PC-9 (cell line): ENCODE measurements at regions of chr10 and their contacts with region 1.

Region 1: DNA sequence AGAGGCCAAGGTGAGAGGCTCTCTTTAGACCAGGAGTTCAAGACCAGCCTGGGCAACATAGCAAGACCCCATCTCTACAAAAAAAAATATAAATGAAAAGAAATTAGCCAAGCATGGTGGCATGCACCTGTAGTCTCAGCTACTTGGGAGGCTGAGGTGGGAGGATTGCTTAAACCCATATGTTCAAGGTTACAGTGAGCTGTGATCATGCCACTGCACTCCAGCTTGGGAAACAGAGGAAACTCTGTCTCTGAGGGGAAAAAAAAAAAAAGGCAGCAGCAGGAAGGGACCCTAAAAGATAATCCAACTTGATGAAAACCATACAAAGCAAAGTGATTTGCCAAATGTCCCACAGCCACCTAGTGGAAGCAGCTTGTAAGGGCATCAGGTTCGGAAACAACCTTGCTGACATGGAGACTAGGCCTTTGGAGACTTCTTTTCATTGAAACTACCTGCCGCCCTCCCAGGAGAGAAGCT is 15.6 kb upstream of the PBLD start:
- DNase-seq: peak in 1 of 2 experiments; percentile 38
- H3K4me3 ChIP-seq: no peak overlapping the region
- H3K27ac ChIP-seq: no peak overlapping the region
- H3K4me1 ChIP-seq: no peaks in the 10 kb centered on the region
- H3K27me3 ChIP-seq: no peaks in the 10 kb centered on the region
- CTCF ChIP-seq: peak; percentile 88

Region 2: DNA sequence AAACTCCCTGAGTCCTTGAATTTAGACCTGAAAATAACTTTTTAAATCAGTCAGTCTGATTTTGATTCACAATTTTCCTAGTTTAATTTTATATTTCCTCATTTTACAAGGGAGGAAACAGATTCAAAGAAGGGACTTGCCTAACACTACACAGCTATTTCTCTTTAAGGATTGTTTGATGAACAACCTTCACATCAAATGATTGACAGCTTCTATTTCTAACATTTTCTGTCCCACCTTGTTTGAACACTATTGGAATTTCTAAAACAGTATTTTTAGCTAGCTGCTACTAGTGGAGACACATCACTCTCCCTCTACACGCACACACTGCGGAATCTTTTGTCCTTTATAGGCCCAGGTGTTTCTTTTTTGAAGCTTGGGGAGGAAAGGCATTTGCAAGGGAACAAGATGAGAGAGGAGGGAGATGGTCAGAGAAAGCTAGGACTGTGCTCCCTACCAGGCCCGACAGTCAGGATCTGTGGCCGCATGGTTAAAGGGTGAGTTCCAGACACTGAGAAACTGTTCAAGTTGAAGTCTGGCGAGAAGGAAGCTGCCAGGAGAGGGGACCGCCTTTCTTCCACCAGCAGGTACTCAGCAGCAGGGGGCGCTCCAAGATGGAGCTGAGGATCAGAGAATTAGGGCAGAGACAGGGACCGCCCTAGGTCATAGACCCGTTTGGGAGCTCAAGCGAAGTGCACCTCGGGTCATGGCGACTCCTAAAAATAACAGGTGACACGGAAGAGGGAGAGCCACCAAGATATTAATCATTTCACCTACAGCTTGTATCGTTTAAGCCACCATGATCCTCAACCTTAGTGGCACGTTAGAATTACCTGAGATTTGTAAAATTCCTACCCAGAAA is 560.0 kb before region 1 on chr10:
- CTCF ChIA-PET with region 1: no interaction called
- POLR2A ChIA-PET with region 1: no interaction called
- intact Hi-C with region 1: loop called (anchors 2 kb)
- DNase-seq: peak in 1 of 2 experiments; percentile 57
- H3K4me3 ChIP-seq: no peak overlapping the region
- H3K27ac ChIP-seq: no peak overlapping the region
- H3K4me1 ChIP-seq: peaks cover 15% of the 10 kb centered on the region; the same call in 1 of the 2 replicates
- H3K27me3 ChIP-seq: no peaks in the 10 kb centered on the region
- CTCF ChIP-seq: peak; percentile 73

Region 3: GRCh38 chr10:68208424-68209042 is 139.8 kb before region 1 on chr10:
- CTCF ChIA-PET with region 1: no interaction called
- POLR2A ChIA-PET with region 1: no interaction called
- intact Hi-C with region 1: loop called (anchors 2 kb)
- DNase-seq: peak; percentile 63 to 78
- H3K4me3 ChIP-seq: no peak overlapping the region
- H3K27ac ChIP-seq: no peak overlapping the region
- H3K4me1 ChIP-seq: peaks cover 7% of the 10 kb centered on the region
- H3K27me3 ChIP-seq: no peaks in the 10 kb centered on the region
- CTCF ChIP-seq: peak; percentile 82

Region 4: GRCh38 chr10:68364101-68364886 is 16.0 kb after region 1 on chr10:
- CTCF ChIA-PET with region 1: interaction called, 11 read pairs
- POLR2A ChIA-PET with region 1: no interaction called
- intact Hi-C with region 1: no loop called
- DNase-seq: no peak
- H3K4me3 ChIP-seq: no peak overlapping the region
- H3K27ac ChIP-seq: no peak overlapping the region
- H3K4me1 ChIP-seq: no peaks in the 10 kb centered on the region
- H3K27me3 ChIP-seq: no peaks in the 10 kb centered on the region
- CTCF ChIP-seq: no peak